Activated CD4-positive, alpha-beta T cell treated with anti-CD3 and anti-CD28 coated beads, Interleukin-2, amount 10 ng/mL, durations not matched to agents 7 days and 5 days (primary cell): ENCODE measurements at regions of chr17 and their contacts with region 1.

Region 1: GRCh38 chr17:4789901-4790704 is 1.3 kb downstream of the GLTPD2 start:
- DNase-seq: peak; percentile 81
- H3K4me3 Mint-ChIP-seq: peak overlapping the region; percentile 81
- H3K27ac Mint-ChIP-seq: peak overlapping the region; percentile 92
- H3K4me1 Mint-ChIP-seq: peaks cover 32% of the 10 kb centered on the region
- H3K27me3 Mint-ChIP-seq: peaks cover 40% of the 10 kb centered on the region

Region 2: GRCh38 chr17:4017377-4017776 is 772.7 kb before region 1 on chr17:
- CTCF ChIA-PET with region 1: no interaction called
- POLR2A ChIA-PET with region 1: no interaction called
- DNase-seq: no peak
- H3K4me3 Mint-ChIP-seq: no peak overlapping the region
- H3K27ac Mint-ChIP-seq: no peak overlapping the region
- H3K4me1 Mint-ChIP-seq: peaks cover 8% of the 10 kb centered on the region
- H3K27me3 Mint-ChIP-seq: no peaks in the 10 kb centered on the region

Region 3: GRCh38 chr17:4703330-4703691 is 86.8 kb before region 1 on chr17:
- CTCF ChIA-PET with region 1: interaction called, 12 read pairs
- POLR2A ChIA-PET with region 1: no interaction called
- DNase-seq: no peak
- H3K4me3 Mint-ChIP-seq: peak overlapping the region; percentile 89
- H3K27ac Mint-ChIP-seq: peak overlapping the region; percentile 97
- H3K4me1 Mint-ChIP-seq: peaks cover 50% of the 10 kb centered on the region
- H3K27me3 Mint-ChIP-seq: no peaks in the 10 kb centered on the region

Region 4: DNA sequence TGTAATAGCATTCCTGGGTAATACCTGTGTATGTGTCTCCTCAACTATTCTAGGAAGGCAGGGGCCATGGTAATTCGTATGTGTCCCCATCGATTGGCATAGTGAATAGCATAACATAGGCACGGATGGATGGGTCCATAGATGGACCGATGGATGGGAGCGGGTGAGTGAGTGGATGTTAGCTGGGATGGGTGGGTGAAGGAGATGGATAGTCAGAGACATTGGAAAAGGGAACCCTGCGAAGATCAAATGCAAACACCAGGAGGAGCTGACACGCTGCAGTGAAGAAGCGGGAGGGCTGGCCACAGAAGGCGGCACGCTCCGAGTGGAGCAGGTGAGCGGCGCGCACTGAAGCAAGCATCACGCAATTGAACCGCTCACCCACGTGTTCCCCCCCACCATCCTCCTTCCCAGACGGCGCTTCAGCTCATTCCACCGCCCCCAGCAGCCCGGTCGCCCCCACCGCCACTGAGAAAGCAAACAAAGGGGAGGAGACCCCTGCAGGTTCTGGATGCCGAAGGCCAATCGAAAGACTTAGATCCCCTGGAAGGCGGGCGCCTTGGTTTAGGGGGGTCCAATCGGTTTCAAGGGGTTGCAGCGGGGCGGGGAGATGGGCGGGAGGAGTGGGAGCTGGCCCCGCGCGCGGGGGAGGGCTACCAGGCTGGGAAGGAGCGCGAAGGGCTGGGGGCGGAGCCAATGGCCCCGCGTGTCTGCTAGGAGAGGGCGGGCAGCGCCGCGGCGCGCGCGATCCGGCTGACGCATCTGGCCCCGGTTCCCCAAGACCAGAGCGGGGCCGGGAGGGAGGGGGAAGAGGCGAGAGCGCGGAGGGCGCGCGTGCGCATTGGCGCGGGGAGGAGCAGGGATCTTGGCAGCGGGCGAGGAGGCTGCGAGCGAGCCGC is 80.1 kb before region 1 on chr17 and contains the start of gene ARRB2:
- CTCF ChIA-PET with region 1: interaction called, 11 read pairs
- POLR2A ChIA-PET with region 1: no interaction called
- DNase-seq: peak; percentile 99
- H3K4me3 Mint-ChIP-seq: peak within 1 kb of the TSS; percentile 98
- H3K27ac Mint-ChIP-seq: peak within 1 kb of the TSS; percentile 97
- H3K4me1 Mint-ChIP-seq: peaks cover 55% of the 10 kb centered on the region
- H3K27me3 Mint-ChIP-seq: no peaks in the 10 kb centered on the region
- total RNA-seq, gene ARRB2: 323 to 336 TPM

Region 5: GRCh38 chr17:4721203-4722135 is 68.6 kb before region 1 on chr17:
- CTCF ChIA-PET with region 1: no interaction called
- POLR2A ChIA-PET with region 1: no interaction called
- DNase-seq: no peak
- H3K4me3 Mint-ChIP-seq: no peak overlapping the region
- H3K27ac Mint-ChIP-seq: peak overlapping the region; percentile 61
- H3K4me1 Mint-ChIP-seq: peaks cover 36% of the 10 kb centered on the region
- H3K27me3 Mint-ChIP-seq: no peaks in the 10 kb centered on the region

Region 6: GRCh38 chr17:4806777-4807604 is 16.9 kb after region 1 on chr17 and contains the start of gene PLD2:
- CTCF ChIA-PET with region 1: interaction called, 20 read pairs
- POLR2A ChIA-PET with region 1: no interaction called
- DNase-seq: peak; percentile 89
- H3K4me3 Mint-ChIP-seq: peak within 1 kb of the TSS; percentile 77
- H3K27ac Mint-ChIP-seq: peak within 1 kb of the TSS; percentile 75
- H3K4me1 Mint-ChIP-seq: peaks cover 22% of the 10 kb centered on the region
- H3K27me3 Mint-ChIP-seq: no peaks in the 10 kb centered on the region
- total RNA-seq, gene PLD2: 16.6 to 17.3 TPM

Region 7: DNA sequence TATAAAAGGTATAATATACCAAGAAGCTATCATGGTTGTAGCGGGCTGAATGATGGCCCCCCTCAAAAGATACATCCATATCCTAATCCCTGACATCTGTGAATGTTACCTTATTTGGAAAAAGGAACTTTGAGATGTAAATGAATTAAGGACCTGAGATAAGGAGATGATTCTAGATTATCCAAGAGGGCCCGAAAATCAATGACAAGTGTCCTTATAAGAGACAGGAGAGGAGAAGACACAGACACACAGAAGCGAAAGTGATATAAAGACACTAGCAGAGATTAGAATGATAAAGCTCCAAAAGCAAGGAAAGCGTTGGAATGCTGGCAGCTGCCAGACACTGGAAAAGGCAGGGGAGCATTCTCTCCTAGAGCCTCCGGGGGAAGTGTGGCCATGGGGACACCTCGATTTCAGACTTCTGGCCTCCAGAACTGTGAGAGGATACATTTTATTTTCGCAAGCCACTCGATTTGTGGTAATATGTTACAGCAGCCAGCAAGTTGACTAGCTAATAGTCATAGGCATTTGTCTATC is 129.5 kb after region 1 on chr17:
- CTCF ChIA-PET with region 1: no interaction called
- POLR2A ChIA-PET with region 1: no interaction called
- DNase-seq: no peak
- H3K4me3 Mint-ChIP-seq: no peak overlapping the region
- H3K27ac Mint-ChIP-seq: no peak overlapping the region
- H3K4me1 Mint-ChIP-seq: no peaks in the 10 kb centered on the region
- H3K27me3 Mint-ChIP-seq: no peaks in the 10 kb centered on the region